Activated CD8-positive, alpha-beta T cell treated with anti-CD3 and anti-CD28 coated beads, Interleukin-2, amount 10 ng/mL, durations not matched to agents 7 days and 5 days (primary cell): ENCODE measurements at regions of chr16 and their contacts with region 1.

Region 1: GRCh38 chr16:2980227-2981086 is at the start of gene PKMYT1:
- DNase-seq: peak; percentile 95
- ATAC-seq: peak; percentile 95
- H3K4me3 Mint-ChIP-seq: peak within 1 kb of the TSS; percentile 87
- H3K27ac Mint-ChIP-seq: peak within 1 kb of the TSS; percentile 88
- H3K4me1 Mint-ChIP-seq: peaks cover 45% of the 10 kb centered on the region
- H3K27me3 Mint-ChIP-seq: no peaks in the 10 kb centered on the region
- total RNA-seq, gene PKMYT1: 144 to 160 TPM

Region 2: DNA sequence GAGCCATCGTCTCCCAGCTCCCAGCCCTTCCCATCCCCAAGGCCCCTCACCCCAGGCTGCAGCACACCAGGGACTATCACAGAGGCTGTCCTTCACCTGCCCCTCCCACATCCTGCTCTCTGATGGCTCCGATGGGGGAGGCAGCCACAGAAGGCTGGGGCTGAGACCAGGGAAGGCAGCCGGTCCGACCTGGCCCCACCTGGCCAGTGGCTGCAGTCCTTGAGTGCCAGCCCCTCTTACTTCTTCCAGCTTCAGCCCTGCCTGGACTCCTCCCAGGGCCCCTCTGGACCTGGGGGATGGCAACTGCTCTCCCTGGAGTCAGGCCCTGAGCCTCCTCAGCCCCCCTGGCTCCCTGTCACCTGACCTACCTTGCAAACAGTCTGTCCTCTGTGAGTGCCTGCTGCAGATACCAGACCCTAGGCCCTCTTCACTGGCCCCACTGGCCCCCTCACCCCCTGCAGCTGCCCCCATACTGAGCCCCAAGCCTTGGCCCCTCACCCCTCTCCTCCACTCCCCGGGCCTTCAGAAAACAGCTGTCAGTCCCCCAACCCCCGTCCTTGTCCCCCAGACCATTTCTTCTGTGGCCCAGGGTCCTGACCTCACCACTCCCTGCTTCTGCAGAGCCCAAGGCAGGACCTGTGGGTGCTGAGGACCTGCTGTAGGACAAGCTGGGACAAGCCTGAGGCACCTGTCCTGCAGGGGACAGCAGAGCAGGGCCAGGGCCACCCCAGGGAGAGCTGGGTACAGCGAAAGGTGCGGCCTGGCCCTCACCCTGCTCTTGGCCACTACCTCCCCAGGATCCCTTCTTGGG is 240.6 kb before region 1 on chr16:
- CTCF ChIA-PET with region 1: no interaction called
- POLR2A ChIA-PET with region 1: no interaction called
- DNase-seq: no peak
- ATAC-seq: no peak
- H3K4me3 Mint-ChIP-seq: no peak overlapping the region
- H3K27ac Mint-ChIP-seq: no peak overlapping the region
- H3K4me1 Mint-ChIP-seq: no peaks in the 10 kb centered on the region
- H3K27me3 Mint-ChIP-seq: peaks cover 3% of the 10 kb centered on the region

Region 3: GRCh38 chr16:2968738-2969544 is 11.5 kb before region 1 on chr16 and contains the start of gene PAQR4:
- CTCF ChIA-PET with region 1: interaction called, 16 read pairs
- POLR2A ChIA-PET with region 1: interaction called, 30 read pairs
- DNase-seq: peak; percentile 87
- ATAC-seq: peak; percentile 76
- H3K4me3 Mint-ChIP-seq: peak within 1 kb of the TSS; percentile 79
- H3K27ac Mint-ChIP-seq: peak within 1 kb of the TSS; percentile 74
- H3K4me1 Mint-ChIP-seq: peaks cover 46% of the 10 kb centered on the region
- H3K27me3 Mint-ChIP-seq: peaks cover 19% of the 10 kb centered on the region
- total RNA-seq, gene PAQR4: 53.6 to 57.7 TPM